Ovary (tissue), 10 donors: ENCODE measurements at regions of chr17 and their contacts with region 1.

Region 1: DNA sequence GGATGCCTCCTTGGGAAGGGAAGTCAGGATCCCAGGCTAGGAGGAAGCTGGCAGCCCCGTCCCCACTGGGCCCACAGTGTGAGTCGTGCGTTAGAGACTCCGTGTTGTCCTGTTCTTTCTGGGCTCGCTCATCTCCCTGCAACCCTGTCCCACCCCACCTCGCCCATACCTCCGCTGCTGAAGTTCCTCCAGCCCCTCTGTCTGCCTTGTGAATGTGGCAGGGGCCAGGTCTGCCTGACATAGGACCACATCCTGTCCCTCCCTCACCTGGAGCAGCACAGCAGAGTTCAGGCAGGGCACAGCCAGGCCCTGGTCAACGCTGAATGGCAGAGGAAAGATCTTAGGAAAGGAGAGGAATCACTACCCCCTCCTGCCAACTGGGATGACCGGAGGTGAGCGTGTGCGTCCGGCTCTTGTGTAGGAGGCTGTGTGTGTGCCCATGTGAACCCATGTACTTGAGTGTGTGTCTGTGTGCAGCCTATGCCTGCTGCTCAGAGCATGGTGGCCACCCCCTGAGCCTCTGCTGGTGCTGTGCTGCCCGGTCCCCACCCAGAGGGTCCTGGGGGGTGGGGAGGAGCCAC is 12.8 kb downstream of the KCNJ18 start:
- DNase-seq: no peak
- H3K4me3 ChIP-seq: no peak overlapping the region
- H3K27ac ChIP-seq: no peak overlapping the region
- H3K4me1 ChIP-seq: no peaks in the 10 kb centered on the region
- H3K27me3 ChIP-seq: no peaks in the 10 kb centered on the region
- CTCF ChIP-seq: no peak
- EP300 ChIP-seq: no peak
- POLR2A ChIP-seq: no peak

Region 2: GRCh38 chr17:21419299-21420239 is 285.5 kb before region 1 on chr17:
- intact Hi-C with region 1: loop called in 1 of 4 experiments (anchors 2 kb)
- DNase-seq: no peak
- H3K4me3 ChIP-seq: no peak overlapping the region
- H3K27ac ChIP-seq: no peak overlapping the region
- H3K4me1 ChIP-seq: no peaks in the 10 kb centered on the region
- H3K27me3 ChIP-seq: no peaks in the 10 kb centered on the region
- CTCF ChIP-seq: no peak
- EP300 ChIP-seq: no peak
- POLR2A ChIP-seq: no peak